Activated CD4-positive, alpha-beta T cell treated with anti-CD3 and anti-CD28 coated beads, Interleukin-2, amount 10 ng/mL, durations not matched to agents 24 days and 14 days (primary cell): ENCODE measurements at regions of chr15 and their contacts with region 1.

Region 1: GRCh38 chr15:93235926-93236780 is 147.1 kb upstream of the RGMA start:
- DNase-seq: peak; percentile 62
- H3K4me3 Mint-ChIP-seq: peak overlapping the region; percentile 78
- H3K27ac Mint-ChIP-seq: peak overlapping the region; percentile 26
- H3K4me1 Mint-ChIP-seq: peaks cover 19% of the 10 kb centered on the region
- H3K27me3 Mint-ChIP-seq: peaks cover 21% of the 10 kb centered on the region

Region 2: DNA sequence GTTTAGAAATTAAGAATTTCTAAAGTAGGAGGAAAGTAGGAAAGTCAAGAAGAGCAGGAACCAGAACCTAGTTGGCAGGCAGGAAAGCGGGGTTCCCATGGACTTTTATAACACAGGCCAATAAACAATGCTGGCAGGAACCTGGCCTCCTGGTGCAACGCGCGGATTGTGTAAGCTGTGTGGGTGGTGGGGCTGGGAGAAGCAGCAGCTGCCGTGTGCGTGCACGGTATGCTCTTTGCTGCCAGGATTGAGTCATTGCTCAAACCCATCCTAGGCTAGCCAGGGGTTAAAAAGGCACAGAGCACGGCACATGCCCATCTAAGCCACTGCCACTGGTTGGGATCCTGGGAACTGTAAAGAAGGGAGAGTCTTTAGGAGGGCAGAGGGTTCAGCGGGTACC is 62.7 kb after region 1 on chr15:
- intact Hi-C with region 1: loop called (anchors 10 kb)
- DNase-seq: no peak
- H3K4me3 Mint-ChIP-seq: no peak overlapping the region
- H3K27ac Mint-ChIP-seq: no peak overlapping the region
- H3K4me1 Mint-ChIP-seq: no peaks in the 10 kb centered on the region
- H3K27me3 Mint-ChIP-seq: peaks cover 2% of the 10 kb centered on the region